ENCODE measurements at regions of chr16 and their contacts with region 1.

Region 1: GRCh38 chr16:68800257-68800875 is 43.0 kb upstream of the TANGO6 start:
- DNase-seq: peak; percentile 77
- ATAC-seq: peak; percentile 95
- H3K4me3 ChIP-seq: no peak overlapping the region
- H3K27ac ChIP-seq: no peak overlapping the region
- H3K4me1 ChIP-seq: peaks cover 21% of the 10 kb centered on the region
- H3K27me3 ChIP-seq: no peaks in the 10 kb centered on the region
- CTCF ChIP-seq: peak; percentile 94
- EP300 ChIP-seq: no peak
- POLR2A ChIP-seq: no peak
- RAD21 ChIP-seq: peak; percentile 96

Region 2: DNA sequence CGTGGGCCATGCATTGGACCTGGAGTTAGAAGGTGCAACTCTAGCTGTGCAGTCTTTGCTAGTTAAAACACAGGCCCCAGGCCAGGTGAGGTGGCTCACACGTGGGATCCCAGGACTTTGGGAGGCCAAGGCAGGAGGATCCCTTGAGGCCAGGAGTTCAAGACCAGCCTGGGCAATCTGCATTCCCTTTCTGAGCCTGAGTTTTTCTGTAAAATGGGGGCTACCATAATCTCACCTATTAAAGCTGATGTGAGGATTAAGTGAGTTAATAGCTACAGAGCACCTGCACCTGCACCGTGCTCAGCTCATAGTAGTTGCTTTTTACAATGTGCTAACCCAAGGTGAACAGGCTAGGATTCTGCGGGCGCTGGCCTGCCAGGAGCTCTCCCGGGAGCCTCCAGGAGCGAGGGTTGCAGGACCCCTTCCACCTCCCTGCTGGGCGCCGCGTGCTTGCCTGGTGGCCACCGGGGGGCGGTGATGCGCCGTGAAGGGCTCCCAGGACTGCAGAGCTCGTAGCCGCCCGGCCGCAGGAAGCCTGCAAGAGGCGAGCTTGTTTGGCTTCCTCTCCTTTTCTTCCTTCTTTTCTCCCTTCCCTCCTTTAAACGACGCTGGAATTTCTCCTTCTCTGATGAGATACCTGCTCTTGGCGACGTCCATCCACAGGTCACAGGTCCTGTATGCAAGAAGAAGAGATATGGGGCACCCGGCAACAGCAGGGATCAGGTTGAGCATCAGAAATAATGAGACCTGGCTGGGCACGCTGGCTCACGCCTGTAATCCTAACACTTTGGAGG is 210.0 kb before region 1 on chr16:
- CTCF ChIA-PET with region 1: interaction called, 9 read pairs
- POLR2A ChIA-PET with region 1: no interaction called
- in situ Hi-C with region 1: no loop called
- intact Hi-C with region 1: loop called (anchors 5 kb)
- DNase-seq: peak; percentile 60
- ATAC-seq: peak; percentile 100
- H3K4me3 ChIP-seq: peak overlapping the region in 1 of 3 experiments; percentile 44; a peak in 1 of 6 replicates
- H3K27ac ChIP-seq: no peak overlapping the region
- H3K4me1 ChIP-seq: no peaks in the 10 kb centered on the region
- H3K27me3 ChIP-seq: peaks cover 0 to 3% of the 10 kb centered on the region in 2 experiments; a peak in 1 of 5 replicates
- CTCF ChIP-seq: peak; percentile 97
- EP300 ChIP-seq: no peak
- POLR2A ChIP-seq: no peak
- RAD21 ChIP-seq: peak; percentile 97

Region 3: DNA sequence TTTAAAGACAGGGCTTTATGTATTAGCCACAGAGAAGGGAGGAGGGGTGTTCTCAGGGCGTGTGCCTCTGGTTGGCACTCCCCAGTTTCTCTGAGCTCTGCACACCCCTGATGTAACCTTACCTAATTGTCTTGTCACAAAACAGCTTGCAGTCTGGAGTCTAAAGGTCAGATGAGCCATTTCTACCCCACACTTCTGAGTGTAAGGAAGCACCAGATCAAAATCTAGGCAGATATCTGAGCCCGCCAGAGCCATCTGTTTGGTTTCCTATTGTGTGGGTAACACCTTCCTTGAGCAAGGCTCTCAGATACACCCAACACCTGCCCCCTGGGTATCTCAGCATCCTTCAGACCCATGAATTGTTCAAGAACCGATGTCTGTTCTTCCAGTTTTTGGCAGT is 47.8 kb before region 1 on chr16:
- CTCF ChIA-PET with region 1: interaction called, 11 read pairs
- POLR2A ChIA-PET with region 1: no interaction called
- in situ Hi-C with region 1: no loop called
- intact Hi-C with region 1: loop called (anchors 1 kb)
- DNase-seq: peak; percentile 40
- ATAC-seq: no peak; the same call in 2 of the 3 replicates
- H3K4me3 ChIP-seq: no peak overlapping the region
- H3K27ac ChIP-seq: no peak overlapping the region
- H3K4me1 ChIP-seq: peaks cover 51% of the 10 kb centered on the region
- H3K27me3 ChIP-seq: no peaks in the 10 kb centered on the region
- CTCF ChIP-seq: no peak
- EP300 ChIP-seq: no peak
- POLR2A ChIP-seq: no peak
- RAD21 ChIP-seq: no peak